ENCODE measurements at regions of chr11 and their contacts with region 1.

Region 1: DNA sequence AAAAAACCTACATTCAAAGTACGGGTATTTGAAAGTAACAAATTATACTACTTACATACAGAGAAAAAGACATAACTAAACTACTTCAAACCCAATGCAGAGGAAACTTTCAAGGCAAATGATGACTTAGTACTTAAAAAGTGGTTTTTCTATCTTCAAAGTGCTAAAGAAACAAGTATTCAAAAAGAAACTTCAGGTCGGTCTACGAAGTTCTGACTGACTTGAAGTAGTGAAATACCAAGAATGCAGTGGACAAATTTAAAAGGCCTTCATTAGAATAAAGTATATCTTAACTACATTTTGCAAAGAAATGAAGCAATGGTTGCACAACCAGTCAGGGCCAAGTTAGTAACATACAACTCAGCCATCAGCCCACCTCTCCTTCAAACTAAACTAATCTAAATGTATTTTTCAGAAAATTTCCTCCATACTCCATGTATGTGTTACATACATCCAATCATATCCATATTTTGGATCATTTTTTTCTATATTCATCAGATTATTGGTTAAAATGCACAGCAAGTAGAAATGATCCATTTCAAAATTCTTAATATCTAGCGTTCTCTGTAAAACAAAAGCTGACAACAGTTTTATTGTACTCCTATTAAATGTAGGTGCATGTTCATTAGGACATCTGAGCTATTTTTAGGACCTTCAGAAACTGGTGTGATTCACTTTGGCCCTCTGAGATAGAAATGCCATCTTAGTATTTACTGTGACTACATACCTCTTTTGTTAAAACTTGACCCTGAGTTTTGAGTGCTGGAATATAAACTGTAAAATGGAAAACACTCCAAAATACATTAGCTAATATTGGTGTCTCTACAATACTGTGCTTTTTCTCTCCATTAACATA is 49.9 kb downstream of the BIRC2 start:
- DNase-seq: peak; percentile 24
- ATAC-seq: no peak
- H3K4me3 ChIP-seq: no peak overlapping the region
- H3K27ac ChIP-seq: no peak overlapping the region
- H3K4me1 ChIP-seq: peaks cover 2% of the 10 kb centered on the region
- H3K27me3 ChIP-seq: no peaks in the 10 kb centered on the region
- CTCF ChIP-seq: no peak
- POLR2A ChIP-seq: no peak
- RAD21 ChIP-seq: no peak

Region 2: DNA sequence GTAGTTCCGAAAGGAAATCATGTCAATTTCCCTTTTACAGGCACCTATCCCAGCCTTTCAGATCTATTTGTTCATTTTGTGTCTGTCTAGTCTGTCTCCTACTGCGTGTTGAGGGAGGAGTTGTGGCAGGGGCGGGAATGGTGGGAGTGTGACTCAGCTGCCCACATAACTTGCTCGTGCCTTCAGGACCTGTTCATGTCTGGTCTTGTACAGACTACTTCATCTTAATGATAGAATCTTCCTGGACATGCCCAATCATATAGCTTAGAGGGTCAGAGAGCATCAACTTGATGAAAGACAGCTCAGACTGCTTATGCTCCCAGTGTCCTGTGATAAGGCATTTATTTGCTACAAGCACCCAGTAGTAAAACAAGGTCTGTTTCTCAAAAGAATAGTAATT is 140.7 kb before region 1 on chr11:
- CTCF ChIA-PET with region 1: no interaction called
- POLR2A ChIA-PET with region 1: no interaction called
- dilution Hi-C with region 1: no loop called
- in situ Hi-C with region 1: no loop called
- intact Hi-C with region 1: no loop called
- DNase-seq: peak; percentile 79
- ATAC-seq: peak; percentile 91
- H3K4me3 ChIP-seq: no peak overlapping the region
- H3K27ac ChIP-seq: no peak overlapping the region
- H3K4me1 ChIP-seq: peaks cover 6% of the 10 kb centered on the region
- H3K27me3 ChIP-seq: no peaks in the 10 kb centered on the region
- CTCF ChIP-seq: no peak
- POLR2A ChIP-seq: no peak
- RAD21 ChIP-seq: no peak

Region 3: DNA sequence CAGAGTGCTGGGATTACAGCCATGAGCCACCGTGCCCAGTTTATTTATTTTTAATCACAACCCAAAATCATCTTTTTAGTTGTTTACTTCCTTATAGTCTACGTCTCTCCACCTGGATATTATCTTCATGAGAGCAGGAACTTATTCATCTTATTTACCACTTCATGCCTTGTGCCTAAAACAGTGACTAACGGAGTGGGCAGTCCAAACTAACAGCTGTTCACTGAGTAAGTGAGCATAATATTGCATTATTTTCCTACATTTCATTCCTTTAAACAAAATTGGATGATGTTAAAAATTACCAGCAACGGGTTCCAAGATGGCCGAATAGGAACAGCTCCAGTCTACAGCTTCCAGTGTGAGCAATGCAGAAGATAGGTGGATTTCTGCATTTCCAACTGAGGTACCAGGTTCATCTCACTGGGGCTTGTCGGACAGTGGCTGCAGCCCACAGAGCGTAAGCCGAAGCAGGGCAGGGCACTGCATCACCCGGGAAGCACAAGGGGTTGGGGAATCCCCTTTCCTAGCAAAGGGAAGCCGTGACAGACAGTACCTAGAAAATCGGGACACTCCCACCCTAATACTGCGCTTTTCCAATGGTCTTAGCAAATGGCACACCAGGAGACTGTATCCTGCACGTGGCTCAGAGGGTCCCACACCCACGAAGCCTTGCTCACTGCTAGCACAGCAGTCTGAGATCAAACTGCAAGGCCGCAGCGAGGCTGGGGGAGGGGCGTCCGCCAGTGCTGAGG is 41.6 kb after region 1 on chr11:
- CTCF ChIA-PET with region 1: no interaction called
- POLR2A ChIA-PET with region 1: no interaction called
- dilution Hi-C with region 1: no loop called
- in situ Hi-C with region 1: no loop called
- intact Hi-C with region 1: loop called (anchors 5 kb)
- DNase-seq: no peak
- ATAC-seq: no peak
- H3K4me3 ChIP-seq: no peak overlapping the region
- H3K27ac ChIP-seq: no peak overlapping the region
- H3K4me1 ChIP-seq: peaks cover 4% of the 10 kb centered on the region
- H3K27me3 ChIP-seq: no peaks in the 10 kb centered on the region
- CTCF ChIP-seq: no peak
- POLR2A ChIP-seq: no peak
- RAD21 ChIP-seq: no peak

Region 4: GRCh38 chr11:102553835-102554282 is 156.9 kb after region 1 on chr11:
- CTCF ChIA-PET with region 1: no interaction called
- POLR2A ChIA-PET with region 1: no interaction called
- dilution Hi-C with region 1: no loop called
- in situ Hi-C with region 1: no loop called
- intact Hi-C with region 1: no loop called
- DNase-seq: no peak
- ATAC-seq: no peak
- H3K4me3 ChIP-seq: no peak overlapping the region
- H3K27ac ChIP-seq: no peak overlapping the region
- H3K4me1 ChIP-seq: peaks cover 5% of the 10 kb centered on the region; the same call in 1 of the 2 replicates
- H3K27me3 ChIP-seq: peaks cover 6% of the 10 kb centered on the region
- CTCF ChIP-seq: no peak
- POLR2A ChIP-seq: no peak
- RAD21 ChIP-seq: no peak